Ascending aorta (tissue), 2 donors: ENCODE measurements at regions of chr2 and their contacts with region 1.

Region 1: DNA sequence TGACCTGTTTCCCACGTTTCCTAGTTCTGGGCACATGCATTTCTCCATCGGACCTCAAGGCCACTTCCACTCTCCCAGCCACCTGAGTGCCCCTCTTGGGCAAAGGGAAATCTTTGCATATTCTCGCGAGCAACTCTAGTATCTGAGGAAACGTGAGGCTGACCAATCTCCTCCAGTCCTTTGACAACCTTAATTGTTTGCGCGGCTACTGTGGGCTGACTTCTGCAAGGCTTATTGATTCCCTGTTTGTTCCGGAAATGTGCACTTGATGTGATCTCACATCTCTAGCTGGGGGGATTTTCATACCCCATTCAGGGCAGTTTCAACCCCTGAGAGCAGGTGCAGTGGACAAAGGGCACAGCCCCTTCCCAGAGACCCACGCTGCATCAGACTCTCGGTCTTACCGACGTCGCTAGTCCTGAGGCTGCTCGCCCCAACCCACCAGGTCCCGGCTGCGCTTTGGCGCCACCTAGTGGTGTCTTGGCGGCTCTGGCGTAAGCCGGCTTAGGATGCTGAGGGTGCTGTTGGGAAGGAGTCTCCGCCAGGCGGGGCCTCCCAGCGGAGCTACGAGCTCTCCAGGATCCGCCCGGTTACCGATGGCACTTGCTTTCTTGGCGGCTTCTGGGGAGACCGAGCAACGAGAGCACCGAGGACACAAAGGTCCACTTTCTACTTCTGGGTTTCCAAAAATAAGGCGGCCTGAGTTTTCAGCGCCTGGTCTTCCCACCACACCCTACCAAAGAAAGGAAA is 24.8 kb upstream of the SPR start:
- DNase-seq: peak; percentile 38 to 93
- H3K4me3 ChIP-seq: peak overlapping the region; percentile 20 to 39
- H3K27ac ChIP-seq: no peak overlapping the region
- H3K4me1 ChIP-seq: peaks cover 0 to 8% of the 10 kb centered on the region in 2 donors
- H3K27me3 ChIP-seq: no peaks in the 10 kb centered on the region
- CTCF ChIP-seq: peak; percentile 86 to 98 (median 97)

Region 2: DNA sequence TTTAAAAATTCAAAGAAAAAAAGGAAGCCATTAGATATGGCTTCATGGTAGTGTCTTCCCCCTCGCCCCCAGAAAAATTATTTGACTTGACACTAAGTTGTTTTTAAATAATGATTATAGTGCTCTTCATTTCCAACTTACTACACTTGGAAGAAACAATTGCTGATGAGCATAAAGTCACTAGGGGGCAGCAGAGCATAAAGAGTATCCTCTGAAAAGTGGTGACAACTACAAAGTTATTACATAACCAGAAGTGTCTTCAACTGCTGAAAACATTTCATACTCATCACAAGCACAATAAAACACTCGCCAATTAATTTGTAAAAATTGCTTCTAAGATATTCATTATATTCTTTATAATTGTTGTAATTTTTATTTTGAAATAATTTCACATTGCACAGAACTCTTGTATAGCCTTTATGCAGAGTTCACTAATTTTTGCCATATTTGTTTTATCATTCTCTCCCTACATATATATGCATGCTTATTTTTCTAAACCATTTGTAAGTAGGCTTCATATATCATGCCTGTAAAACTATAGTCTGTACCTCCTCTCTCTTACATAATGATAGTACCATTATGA is 91.4 kb before region 1 on chr2:
- intact Hi-C with region 1: loop called (anchors 1 kb)
- DNase-seq: peak in 1 of 2 donors; percentile 75
- H3K4me3 ChIP-seq: no peak overlapping the region
- H3K27ac ChIP-seq: no peak overlapping the region
- H3K4me1 ChIP-seq: no peaks in the 10 kb centered on the region
- H3K27me3 ChIP-seq: no peaks in the 10 kb centered on the region
- CTCF ChIP-seq: peak; percentile 72 to 85 (median 83)

Region 3: GRCh38 chr2:72825241-72826155 is 36.9 kb before region 1 on chr2 and contains the start of gene EXOC6B:
- intact Hi-C with region 1: loop called (anchors 5 kb)
- DNase-seq: peak; percentile 58 to 94
- H3K4me3 ChIP-seq: peak within 1 kb of the TSS; percentile 75 to 77
- H3K27ac ChIP-seq: peak within 1 kb of the TSS; percentile 70 to 75
- H3K4me1 ChIP-seq: peaks cover 0 to 4% of the 10 kb centered on the region in 2 donors
- H3K27me3 ChIP-seq: no peaks in the 10 kb centered on the region
- CTCF ChIP-seq: peak in 1 of 3 experiments; percentile 14
- total RNA-seq, gene EXOC6B: 32.4 TPM

Region 4: DNA sequence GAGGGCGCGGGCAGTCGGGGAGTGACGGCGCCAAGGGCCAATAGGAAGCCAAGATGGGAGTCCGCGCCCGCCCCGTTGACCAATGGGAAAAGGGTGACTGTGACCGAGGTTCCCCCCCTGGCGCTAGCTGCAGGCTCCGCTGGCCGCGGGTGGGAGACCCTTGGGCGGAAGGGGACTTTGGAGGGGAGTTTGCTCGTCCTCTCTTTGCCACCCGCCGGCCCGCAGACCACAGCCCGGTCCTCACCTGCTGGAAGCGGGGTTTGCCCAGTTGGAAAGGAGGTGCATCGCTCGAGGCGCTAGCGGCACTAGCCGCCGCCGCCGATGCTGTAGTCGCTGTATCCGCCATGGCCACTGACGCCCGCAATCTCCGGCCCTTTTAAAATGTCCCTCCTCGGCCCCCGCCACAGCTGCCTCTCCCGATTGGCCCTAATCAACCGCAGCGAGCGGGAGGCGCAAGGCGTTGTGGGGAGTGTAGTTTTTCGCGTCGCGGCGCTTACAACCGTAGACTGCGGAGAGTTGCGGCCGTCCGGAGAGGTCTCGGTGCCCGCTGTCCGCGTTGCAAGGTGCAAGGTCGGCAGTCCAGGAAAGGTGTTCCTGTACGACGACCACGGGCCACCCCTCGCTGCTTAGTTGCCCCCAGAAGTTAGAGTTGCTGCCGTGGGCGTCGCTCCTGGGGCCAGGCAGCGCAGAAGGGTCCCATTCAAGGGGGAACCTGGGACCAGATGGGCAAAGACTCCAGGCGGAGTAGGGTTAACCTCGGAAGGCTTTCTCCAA is 209.1 kb after region 1 on chr2 and contains the start of gene SFXN5:
- intact Hi-C with region 1: no loop called
- DNase-seq: peak; percentile 90 to 99
- H3K4me3 ChIP-seq: peak within 1 kb of the TSS; percentile 91 to 92
- H3K27ac ChIP-seq: peak within 1 kb of the TSS; percentile 84 to 93
- H3K4me1 ChIP-seq: peaks cover 10 to 15% of the 10 kb centered on the region in 2 donors
- H3K27me3 ChIP-seq: no peaks in the 10 kb centered on the region
- CTCF ChIP-seq: peak; percentile 21 to 24 (median 24)
- total RNA-seq, gene SFXN5: 9.3 TPM